IMR-90 (cell line): ENCODE measurements at regions of chr13 and their contacts with region 1.

Region 1: DNA sequence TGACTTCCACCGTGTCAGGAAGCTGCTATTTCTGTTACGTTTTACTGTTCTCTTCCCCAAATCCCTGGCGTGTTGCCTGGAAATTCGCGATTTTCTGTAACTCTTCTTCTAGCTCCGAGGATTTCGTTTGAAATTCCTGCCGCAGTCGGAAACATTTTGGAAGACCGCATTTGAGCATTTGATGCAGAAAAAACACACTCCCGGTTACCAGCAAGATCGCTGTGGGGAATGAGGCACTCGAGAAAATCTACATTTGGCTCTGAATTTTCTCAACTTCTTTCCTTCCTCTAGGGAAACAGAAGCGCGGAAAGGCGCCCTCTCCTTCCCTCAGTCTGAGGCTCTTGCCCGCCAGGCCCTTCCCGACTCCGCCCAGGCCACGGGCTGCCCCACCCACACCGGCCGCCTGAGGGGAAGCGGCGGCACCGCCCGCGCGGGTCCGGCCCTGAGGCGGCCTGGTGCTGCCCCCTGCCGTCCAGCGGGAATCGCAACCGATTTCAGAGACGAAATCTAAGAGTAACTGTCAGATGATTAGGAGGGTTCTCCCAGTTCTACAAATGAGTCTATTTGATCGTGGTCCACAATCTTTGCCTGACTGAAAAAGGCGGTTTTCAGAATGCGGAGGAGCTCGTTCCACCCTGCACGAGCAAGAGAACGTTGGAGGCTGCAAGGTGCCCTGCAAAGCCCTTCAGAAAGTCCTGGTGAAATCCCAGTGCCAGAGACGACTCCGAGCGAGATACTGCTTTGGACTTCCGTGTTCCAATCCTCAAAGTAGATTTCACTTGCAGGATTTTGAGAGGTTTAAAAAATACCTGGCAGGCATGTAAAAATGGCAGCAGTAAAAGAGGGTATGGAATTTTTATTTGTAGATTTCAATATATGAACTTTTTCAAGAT is 18.4 kb upstream of the TUBGCP3 start:
- DNase-seq: peak; percentile 78
- ATAC-seq: peak; percentile 100
- H3K4me3 ChIP-seq: peak overlapping the region; percentile 56
- H3K27ac ChIP-seq: peak overlapping the region; percentile 49; the same call in 1 of the 2 replicates
- H3K4me1 ChIP-seq: no peaks in the 10 kb centered on the region; the same call in 1 of the 2 replicates
- H3K27me3 ChIP-seq: peaks cover 14% of the 10 kb centered on the region
- CTCF ChIP-seq: peak; percentile 98
- POLR2A ChIP-seq: 0 out of 2 replicates have a peak, but pooled peaks have one; percentile 21
- RAD21 ChIP-seq: peak; percentile 92

Region 2: DNA sequence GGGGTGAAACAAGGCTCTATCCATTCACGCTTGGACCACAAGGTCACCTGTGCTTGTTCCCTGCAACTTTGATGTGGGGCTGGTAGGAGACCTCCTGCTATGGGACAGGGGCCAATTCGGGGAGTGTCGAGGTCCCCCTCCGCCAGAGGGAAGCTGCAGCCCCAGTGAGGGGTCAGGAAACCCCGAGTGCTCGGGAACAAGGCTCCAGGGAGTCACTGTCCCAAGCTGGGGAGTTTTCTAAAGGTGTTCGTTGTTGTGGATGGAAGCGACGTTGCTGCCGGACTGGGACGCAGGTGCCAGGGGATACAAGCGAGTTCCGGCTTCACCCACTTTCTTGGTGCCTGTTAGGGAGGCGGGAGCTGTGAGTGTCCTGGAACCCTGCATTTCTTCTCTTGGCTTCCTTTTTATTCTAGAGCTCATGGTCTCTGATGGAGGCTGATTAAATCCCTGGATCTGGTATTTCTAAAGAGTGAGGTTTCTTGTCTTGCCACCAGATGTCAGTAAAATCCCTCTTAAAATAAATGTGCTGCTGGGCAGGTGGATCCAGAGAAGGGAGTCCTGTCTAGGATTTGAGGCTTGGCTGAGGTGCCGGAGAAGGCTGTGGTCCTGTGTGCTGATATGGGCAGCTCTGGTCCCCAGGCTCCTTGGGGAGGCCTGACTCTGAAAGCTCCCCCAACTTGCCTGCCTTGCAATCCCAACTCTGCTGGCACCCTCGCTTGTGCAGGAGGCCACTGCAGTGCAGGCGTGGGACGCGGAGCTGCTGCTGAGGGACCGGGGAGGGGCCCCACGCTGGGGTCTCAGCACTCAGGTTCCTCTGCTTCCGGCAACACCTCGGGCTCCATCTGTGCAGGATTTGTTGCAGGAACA is 1132.0 kb before region 1 on chr13:
- CTCF ChIA-PET with region 1: no interaction called
- POLR2A ChIA-PET with region 1: no interaction called
- dilution Hi-C with region 1: no loop called
- in situ Hi-C with region 1: loop called (anchors 5 kb)
- intact Hi-C with region 1: loop called (anchors 1 kb)
- DNase-seq: peak; percentile 35
- ATAC-seq: peak; percentile 92
- H3K4me3 ChIP-seq: no peak overlapping the region
- H3K27ac ChIP-seq: no peak overlapping the region
- H3K4me1 ChIP-seq: no peaks in the 10 kb centered on the region
- H3K27me3 ChIP-seq: no peaks in the 10 kb centered on the region
- CTCF ChIP-seq: peak; percentile 57
- POLR2A ChIP-seq: no peak
- RAD21 ChIP-seq: peak; percentile 57

Region 3: DNA sequence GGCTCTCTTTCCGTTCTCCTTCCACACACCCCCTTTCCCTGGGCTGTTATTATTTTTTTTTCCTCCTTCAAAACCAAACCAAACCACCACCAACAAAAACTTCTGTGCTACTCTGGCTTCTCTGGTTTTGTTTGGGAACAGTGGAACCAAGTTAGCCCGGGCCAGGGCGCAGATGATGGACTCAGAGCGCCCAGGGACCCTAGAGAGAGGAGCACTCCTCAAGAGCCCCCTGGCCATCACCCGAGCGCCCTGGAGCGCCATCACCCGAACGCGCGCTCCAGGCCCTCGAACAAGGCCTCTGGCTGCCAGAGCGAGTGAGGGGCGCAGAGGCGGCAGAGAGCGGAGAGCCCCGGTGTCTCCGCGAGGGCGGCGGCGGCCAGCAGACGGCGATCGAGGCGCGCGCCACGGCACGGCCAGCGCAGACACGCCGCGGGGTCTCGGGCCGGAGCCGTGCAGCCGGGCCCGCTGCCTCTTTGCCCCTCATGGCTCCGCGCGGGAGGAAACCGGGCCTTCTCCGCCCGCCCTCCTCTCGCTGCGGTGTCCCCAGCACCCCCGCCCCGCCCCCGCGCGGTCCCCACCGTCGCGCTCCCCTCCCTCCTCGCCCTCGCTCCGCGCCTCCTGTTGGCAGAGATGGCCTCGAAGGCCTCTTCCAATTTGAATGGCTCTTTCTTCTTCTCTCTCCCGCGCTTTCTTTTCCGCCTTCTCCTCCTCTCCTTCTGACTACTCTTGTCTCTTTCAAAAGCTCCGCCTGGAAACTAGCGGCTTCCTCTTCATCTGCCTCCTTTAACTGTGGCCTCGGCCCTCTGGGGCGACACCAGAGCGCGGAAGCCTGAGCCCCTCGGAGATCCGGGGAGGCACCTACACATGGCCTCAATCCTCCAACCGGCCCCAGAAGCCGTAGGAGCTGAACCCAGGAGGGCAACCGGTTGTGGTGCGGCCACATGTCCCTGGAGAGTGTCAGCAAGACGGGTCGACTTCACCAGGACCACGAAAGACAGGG is 543.5 kb before region 1 on chr13:
- CTCF ChIA-PET with region 1: no interaction called
- POLR2A ChIA-PET with region 1: no interaction called
- dilution Hi-C with region 1: no loop called
- in situ Hi-C with region 1: no loop called
- intact Hi-C with region 1: loop called (anchors 2 kb)
- DNase-seq: no peak
- ATAC-seq: no peak
- H3K4me3 ChIP-seq: no peak overlapping the region
- H3K27ac ChIP-seq: no peak overlapping the region
- H3K4me1 ChIP-seq: no peaks in the 10 kb centered on the region
- H3K27me3 ChIP-seq: peaks cover 77% of the 10 kb centered on the region
- CTCF ChIP-seq: 0 out of 2 replicates have a peak, but pooled peaks have one; percentile 12
- POLR2A ChIP-seq: no peak
- RAD21 ChIP-seq: no peak

Region 4: DNA sequence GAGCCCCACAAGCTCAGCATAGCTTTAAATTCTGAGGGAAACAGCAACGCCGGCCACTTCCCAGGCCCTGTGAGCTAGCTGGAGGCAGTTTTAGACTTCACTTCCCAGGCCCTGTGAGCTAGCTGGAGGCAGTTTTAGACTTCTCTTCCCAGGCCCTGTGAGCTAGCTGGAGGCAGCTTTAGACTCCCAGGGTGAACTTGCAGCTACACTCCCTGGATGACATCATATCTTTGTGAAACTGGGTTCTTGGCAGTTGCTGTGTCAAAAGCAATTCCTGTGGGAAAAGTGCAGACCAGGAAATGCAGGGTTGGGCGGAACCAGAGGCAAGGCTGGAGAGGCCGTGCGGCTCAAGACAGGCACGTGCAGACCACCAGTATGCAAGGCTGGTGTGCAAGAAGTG is 526.7 kb before region 1 on chr13:
- CTCF ChIA-PET with region 1: no interaction called
- POLR2A ChIA-PET with region 1: no interaction called
- dilution Hi-C with region 1: no loop called
- in situ Hi-C with region 1: loop called (anchors 25 kb)
- intact Hi-C with region 1: no loop called
- DNase-seq: no peak
- ATAC-seq: no peak
- H3K4me3 ChIP-seq: no peak overlapping the region
- H3K27ac ChIP-seq: no peak overlapping the region
- H3K4me1 ChIP-seq: no peaks in the 10 kb centered on the region
- H3K27me3 ChIP-seq: peaks cover 11% of the 10 kb centered on the region
- CTCF ChIP-seq: no peak
- POLR2A ChIP-seq: no peak
- RAD21 ChIP-seq: no peak

Region 5: GRCh38 chr13:112510002-112510780 is 96.2 kb before region 1 on chr13:
- CTCF ChIA-PET with region 1: no interaction called
- POLR2A ChIA-PET with region 1: no interaction called
- dilution Hi-C with region 1: no loop called
- in situ Hi-C with region 1: no loop called
- intact Hi-C with region 1: loop called (anchors 10 kb)
- DNase-seq: peak; percentile 71
- ATAC-seq: peak; percentile 92
- H3K4me3 ChIP-seq: no peak overlapping the region
- H3K27ac ChIP-seq: no peak overlapping the region
- H3K4me1 ChIP-seq: no peaks in the 10 kb centered on the region
- H3K27me3 ChIP-seq: no peaks in the 10 kb centered on the region
- CTCF ChIP-seq: peak; percentile 55
- POLR2A ChIP-seq: no peak
- RAD21 ChIP-seq: peak; percentile 56